Uterus (tissue), 4 donors: ENCODE measurements at regions of chr5 and their contacts with region 1.

Region 1: GRCh38 chr5:142869883-142870282 is 99.7 kb downstream of the ARHGAP26 start:
- DNase-seq: no peak
- H3K4me3 ChIP-seq: no peak overlapping the region
- H3K27ac ChIP-seq: no peak overlapping the region
- H3K4me1 ChIP-seq: no peaks in the 10 kb centered on the region
- H3K27me3 ChIP-seq: no peaks in the 10 kb centered on the region
- CTCF ChIP-seq: no peak
- POLR2A ChIP-seq: no peak

Region 2: GRCh38 chr5:142590451-142591231 is 279.2 kb before region 1 on chr5:
- intact Hi-C with region 1: no loop called
- DNase-seq: no peak
- H3K4me3 ChIP-seq: no peak overlapping the region
- H3K27ac ChIP-seq: no peak overlapping the region
- H3K4me1 ChIP-seq: no peaks in the 10 kb centered on the region
- H3K27me3 ChIP-seq: no peaks in the 10 kb centered on the region
- CTCF ChIP-seq: no peak
- POLR2A ChIP-seq: no peak

Region 3: GRCh38 chr5:142713121-142713706 is 156.7 kb before region 1 on chr5:
- intact Hi-C with region 1: loop called (anchors 5 kb)
- DNase-seq: peak; percentile 83 to 84
- H3K4me3 ChIP-seq: peak overlapping the region; percentile 26 to 53
- H3K27ac ChIP-seq: peak overlapping the region; percentile 86 to 89
- H3K4me1 ChIP-seq: no peaks in the 10 kb centered on the region
- H3K27me3 ChIP-seq: no peaks in the 10 kb centered on the region
- CTCF ChIP-seq: peak; percentile 83 to 99 (median 92)
- POLR2A ChIP-seq: no peak

Region 4: GRCh38 chr5:142769741-142770631 is 99.9 kb before region 1 on chr5 and contains the start of gene ARHGAP26:
- intact Hi-C with region 1: loop called (anchors 10 kb)
- DNase-seq: peak; percentile 96 to 98
- H3K4me3 ChIP-seq: peak within 1 kb of the TSS; percentile 62 to 67
- H3K27ac ChIP-seq: peak within 1 kb of the TSS; percentile 75 to 96
- H3K4me1 ChIP-seq: no peaks in the 10 kb centered on the region
- H3K27me3 ChIP-seq: no peaks in the 10 kb centered on the region
- CTCF ChIP-seq: peak; percentile 16 to 40 (median 23)
- POLR2A ChIP-seq: peak; percentile 100
- total RNA-seq, gene ARHGAP26: 12.4 to 49.5 (median 31.8) TPM